ENCODE measurements at regions of chr16 and their contacts with region 1.

Region 1: DNA sequence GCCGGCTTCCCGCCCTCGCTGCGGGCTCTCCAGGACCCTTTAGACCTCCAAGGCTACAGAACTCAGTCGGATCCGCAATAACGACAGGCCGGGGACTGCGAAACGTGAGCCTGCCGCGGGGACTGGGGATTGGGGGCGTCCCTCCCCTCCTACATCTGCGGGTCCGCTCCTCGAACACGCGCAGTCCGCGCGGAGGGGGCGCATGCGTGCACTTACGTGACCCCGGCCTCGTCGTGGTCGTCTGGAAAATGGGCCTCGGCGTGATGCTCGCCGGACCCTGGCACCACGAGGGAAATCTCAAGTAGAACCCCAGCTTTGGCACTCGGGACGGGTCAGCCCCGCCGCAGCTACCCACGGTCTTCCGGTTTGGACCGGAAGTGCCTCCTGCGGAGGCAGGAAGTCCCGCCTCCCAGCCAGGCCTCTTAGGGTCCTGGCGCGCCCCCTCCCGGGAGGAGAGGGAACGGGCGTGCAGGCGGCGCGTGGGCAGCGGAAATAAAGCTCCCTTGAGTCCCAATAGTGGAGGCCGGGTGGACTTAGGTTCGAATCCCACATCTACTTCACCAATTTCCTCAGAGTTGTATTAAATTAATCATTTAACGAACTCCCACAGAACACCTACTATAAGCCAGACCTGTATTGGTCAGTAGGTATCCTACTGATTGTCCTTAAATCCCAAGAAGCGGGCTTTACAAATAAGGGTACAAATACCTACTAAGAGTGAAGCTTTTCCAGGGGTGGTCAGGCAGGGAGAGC is at the start of gene TAF1C:
- DNase-seq: peak; percentile 98
- total RNA-seq, gene TAF1C: 32.3 to 35.9 TPM

Region 2: GRCh38 chr16:83967806-83968305 is 219.0 kb before region 1 on chr16 and contains the start of gene NECAB2:
- intact Hi-C with region 1: loop called in 1 of 2 experiments (anchors 5 kb)
- DNase-seq: peak; percentile 86
- total RNA-seq, gene NECAB2: 0.71 to 3.0 TPM

Region 3: GRCh38 chr16:84121007-84121406 is 65.9 kb before region 1 on chr16:
- intact Hi-C with region 1: loop called in 1 of 2 experiments (anchors 10 kb)
- DNase-seq: peak; percentile 59

Region 4: GRCh38 chr16:84247844-84248243 is 61.0 kb after region 1 on chr16:
- intact Hi-C with region 1: no loop called
- DNase-seq: no peak